Caco-2 (cell line): ENCODE measurements at regions of chr11 and their contacts with region 1.

Region 1: GRCh38 chr11:60831143-60831500 is 10.8 kb upstream of the CCDC86 start:
- DNase-seq: peak; percentile 70 to 83
- H3K4me3 ChIP-seq: no peak overlapping the region
- H3K4me3 Mint-ChIP-seq: no peak overlapping the region
- H3K27ac Mint-ChIP-seq: no peak overlapping the region
- H3K4me1 ChIP-seq: no peaks in the 10 kb centered on the region
- H3K4me1 Mint-ChIP-seq: no peaks in the 10 kb centered on the region
- H3K27me3 ChIP-seq: no peaks in the 10 kb centered on the region
- H3K27me3 Mint-ChIP-seq: peaks cover 3% of the 10 kb centered on the region
- CTCF ChIP-seq: peak; percentile 92 to 94

Region 2: GRCh38 chr11:60899046-60899936 is 68.2 kb after region 1 on chr11:
- CTCF ChIA-PET with region 1: interaction called, 29 read pairs
- POLR2A ChIA-PET with region 1: no interaction called
- intact Hi-C with region 1: loop called (anchors 1 kb)
- DNase-seq: peak in 1 of 2 experiments; percentile 71
- H3K4me3 ChIP-seq: no peak overlapping the region
- H3K4me3 Mint-ChIP-seq: no peak overlapping the region
- H3K27ac Mint-ChIP-seq: no peak overlapping the region
- H3K4me1 ChIP-seq: no peaks in the 10 kb centered on the region
- H3K4me1 Mint-ChIP-seq: no peaks in the 10 kb centered on the region
- H3K27me3 ChIP-seq: no peaks in the 10 kb centered on the region
- H3K27me3 Mint-ChIP-seq: no peaks in the 10 kb centered on the region
- CTCF ChIP-seq: peak; percentile 92 to 95